ENCODE measurements at regions of chr1 and their contacts with region 1.

Region 1: DNA sequence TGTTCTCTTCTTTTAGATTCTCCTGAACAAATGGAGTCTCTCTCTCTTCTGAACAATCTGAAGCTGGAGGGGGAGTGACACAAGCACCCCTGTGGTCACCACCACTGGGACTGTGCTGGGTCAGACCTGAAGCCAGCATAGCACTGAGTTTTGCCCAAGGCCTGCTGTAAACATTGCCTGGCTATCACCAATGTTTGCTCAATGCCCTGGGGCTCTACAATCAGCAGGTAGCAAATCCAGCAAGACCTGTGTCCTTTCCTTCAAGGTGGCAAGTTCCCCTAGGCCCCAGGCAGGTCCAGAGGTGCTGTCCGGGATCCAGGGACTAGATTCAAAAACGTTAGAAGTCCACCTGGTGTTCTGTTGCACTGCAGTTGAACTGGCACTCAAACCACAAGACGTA is 282.8 kb upstream of the PROX1 start:
- DNase-seq: no peak
- H3K4me3 ChIP-seq: no peak overlapping the region
- H3K27ac ChIP-seq: no peak overlapping the region
- H3K4me1 ChIP-seq: no peaks in the 10 kb centered on the region
- H3K27me3 ChIP-seq: no peaks in the 10 kb centered on the region
- CTCF ChIP-seq: no peak
- EP300 ChIP-seq: no peak
- POLR2A ChIP-seq: no peak

Region 2: DNA sequence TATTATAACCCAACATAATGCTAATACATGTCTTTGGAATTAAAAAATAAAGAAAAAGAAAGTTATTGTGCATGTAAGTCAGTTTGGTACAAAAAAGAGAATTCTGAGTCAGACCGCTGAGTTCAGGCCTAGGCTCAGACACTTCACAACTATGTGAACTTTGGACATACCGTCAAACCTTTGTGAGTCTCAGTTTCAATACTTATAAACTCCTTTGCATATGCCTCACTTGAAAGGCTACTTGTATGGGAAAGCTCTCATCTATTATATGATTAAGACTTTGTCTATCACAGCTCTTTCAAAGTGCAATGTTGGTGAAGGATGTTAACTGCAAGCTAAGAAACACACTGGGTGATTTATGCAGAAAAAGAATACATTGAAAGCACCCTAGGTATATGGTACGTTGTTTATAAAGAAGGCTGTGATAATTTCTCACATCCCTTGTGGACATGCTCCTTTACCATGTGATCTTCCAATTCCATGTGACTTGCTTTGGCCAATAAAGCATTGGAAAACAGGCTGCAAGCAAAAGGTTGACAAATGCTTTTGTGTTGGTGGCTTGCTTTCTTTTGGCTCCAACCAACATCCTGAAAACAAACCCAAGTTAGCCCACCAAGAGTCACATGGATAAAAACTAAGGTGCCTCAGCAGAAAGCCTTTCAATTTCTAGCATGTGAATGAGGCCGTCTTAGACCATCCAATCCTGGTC is 1719.2 kb before region 1 on chr1:
- intact Hi-C with region 1: loop called in 1 of 4 experiments (anchors 5 kb)
- DNase-seq: no peak
- H3K4me3 ChIP-seq: no peak overlapping the region
- H3K27ac ChIP-seq: no peak overlapping the region
- H3K4me1 ChIP-seq: no peaks in the 10 kb centered on the region
- H3K27me3 ChIP-seq: no peaks in the 10 kb centered on the region
- CTCF ChIP-seq: no peak
- EP300 ChIP-seq: no peak
- POLR2A ChIP-seq: no peak

Region 3: DNA sequence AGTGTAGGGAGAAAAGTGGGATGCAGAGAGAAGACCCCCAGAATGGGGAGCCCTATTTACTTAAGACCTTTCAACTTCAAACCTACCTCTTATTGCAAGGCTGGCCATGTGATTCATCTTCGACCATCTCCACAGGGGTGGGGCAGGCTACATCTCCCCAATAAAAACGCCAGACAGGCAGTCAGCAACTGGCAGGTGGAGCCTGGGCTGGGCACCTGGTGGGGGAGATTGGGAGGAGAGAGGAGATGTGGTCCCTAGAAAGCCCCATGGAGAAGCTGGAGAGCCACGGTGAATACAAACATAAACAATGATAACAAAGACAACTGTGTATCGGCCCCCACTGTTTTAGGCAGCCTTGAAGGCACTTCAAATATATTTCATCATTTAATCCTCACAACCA is 53.9 kb before region 1 on chr1:
- intact Hi-C with region 1: loop called in 1 of 4 experiments (anchors 2 kb)
- DNase-seq: no peak
- H3K4me3 ChIP-seq: no peak overlapping the region
- H3K27ac ChIP-seq: no peak overlapping the region
- H3K4me1 ChIP-seq: no peaks in the 10 kb centered on the region
- H3K27me3 ChIP-seq: no peaks in the 10 kb centered on the region
- CTCF ChIP-seq: no peak
- EP300 ChIP-seq: no peak
- POLR2A ChIP-seq: no peak

Region 4: GRCh38 chr1:213852107-213852506 is 147.2 kb after region 1 on chr1:
- intact Hi-C with region 1: no loop called
- DNase-seq: no peak
- H3K4me3 ChIP-seq: no peak overlapping the region
- H3K27ac ChIP-seq: no peak overlapping the region
- H3K4me1 ChIP-seq: no peaks in the 10 kb centered on the region
- H3K27me3 ChIP-seq: no peaks in the 10 kb centered on the region
- CTCF ChIP-seq: no peak
- EP300 ChIP-seq: no peak
- POLR2A ChIP-seq: no peak

Measured in ovary (tissue), 10 donors.